ENCODE measurements at regions of chr14 and their contacts with region 1.

Region 1: DNA sequence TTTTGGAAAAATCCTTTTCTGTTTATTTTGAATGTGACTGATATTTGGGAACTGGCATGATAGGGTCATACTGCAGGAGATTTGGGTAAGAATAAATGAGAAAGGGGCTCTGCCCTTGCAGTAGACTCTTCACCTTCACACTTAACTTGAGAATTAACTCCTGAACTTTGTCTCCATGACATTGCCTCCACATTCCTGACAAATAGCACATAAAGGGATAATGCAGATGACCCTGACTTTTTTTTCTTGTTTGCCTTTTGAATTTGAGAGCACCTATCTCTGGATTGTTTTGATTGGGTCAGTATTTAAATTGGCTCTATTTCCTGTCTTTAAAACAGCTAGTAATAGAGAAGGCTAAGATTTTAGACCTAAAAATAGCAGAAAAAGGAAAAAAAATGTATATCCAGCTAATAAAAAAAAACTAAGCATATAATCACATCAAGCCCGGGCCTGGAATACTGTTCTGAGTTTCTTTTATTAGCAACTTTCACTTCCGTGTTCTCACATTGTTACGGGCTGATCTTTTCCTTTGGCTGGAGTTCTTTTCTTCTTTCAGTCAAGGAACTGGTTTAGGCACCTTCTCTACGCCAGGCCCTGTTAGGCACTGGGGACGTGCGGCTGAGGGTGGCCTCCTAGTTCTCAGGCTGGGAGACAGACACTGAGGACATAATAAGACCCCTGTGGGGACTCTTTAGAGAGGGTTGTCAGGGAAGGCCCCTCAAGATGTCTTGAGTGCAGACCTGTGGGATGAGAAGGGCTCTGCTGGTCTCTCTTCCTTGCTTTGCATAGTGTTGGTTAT is 53.1 kb upstream of the GNPNAT1 start:
- DNase-seq: no peak
- ATAC-seq: peak; percentile 67
- H3K4me3 Mint-ChIP-seq: 0 out of 2 replicates have a peak overlapping the region, but pooled peaks have one; percentile 17
- H3K27ac Mint-ChIP-seq: peak overlapping the region; percentile 94
- H3K4me1 Mint-ChIP-seq: peaks cover 37% of the 10 kb centered on the region
- H3K27me3 Mint-ChIP-seq: no peaks in the 10 kb centered on the region
- CTCF ChIP-seq: no peak

Region 2: GRCh38 chr14:52422650-52423356 is 421.7 kb before region 1 on chr14:
- CTCF ChIA-PET with region 1: no interaction called
- POLR2A ChIA-PET with region 1: interaction called, 10 read pairs
- DNase-seq: no peak
- ATAC-seq: no peak
- H3K4me3 Mint-ChIP-seq: no peak overlapping the region
- H3K27ac Mint-ChIP-seq: no peak overlapping the region
- H3K4me1 Mint-ChIP-seq: no peaks in the 10 kb centered on the region
- H3K27me3 Mint-ChIP-seq: no peaks in the 10 kb centered on the region
- CTCF ChIP-seq: no peak

Region 3: GRCh38 chr14:52937306-52937705 is 92.8 kb after region 1 on chr14:
- CTCF ChIA-PET with region 1: no interaction called
- POLR2A ChIA-PET with region 1: no interaction called
- DNase-seq: no peak
- ATAC-seq: no peak
- H3K4me3 Mint-ChIP-seq: no peak overlapping the region
- H3K27ac Mint-ChIP-seq: peak overlapping the region; percentile 2
- H3K4me1 Mint-ChIP-seq: peaks cover 43% of the 10 kb centered on the region
- H3K27me3 Mint-ChIP-seq: no peaks in the 10 kb centered on the region
- CTCF ChIP-seq: no peak

Measured in WTC11 (cell line).